PC-3 (cell line): ENCODE measurements at regions of chr1 and their contacts with region 1.

Region 1: GRCh38 chr1:112955781-112956543 is at the start of gene SLC16A1:
- DNase-seq: peak; percentile 92
- ATAC-seq: peak; percentile 75
- H3K4me3 ChIP-seq: peak within 1 kb of the TSS; percentile 82
- H3K27ac ChIP-seq: peak within 1 kb of the TSS; percentile 68
- H3K4me1 ChIP-seq: peaks cover 28% of the 10 kb centered on the region
- H3K27me3 ChIP-seq: no peaks in the 10 kb centered on the region
- CTCF ChIP-seq: 0 out of 2 replicates have a peak, but pooled peaks have one; percentile 11
- total RNA-seq, gene SLC16A1: 103 and 116 TPM in 2 replicates

Region 2: GRCh38 chr1:112809253-112809684 is 146.7 kb before region 1 on chr1:
- CTCF ChIA-PET with region 1: no interaction called
- POLR2A ChIA-PET with region 1: no interaction called
- intact Hi-C with region 1: loop called (anchors 1 kb)
- DNase-seq: peak; percentile 86
- ATAC-seq: peak; percentile 92
- H3K4me3 ChIP-seq: no peak overlapping the region
- H3K27ac ChIP-seq: no peak overlapping the region
- H3K4me1 ChIP-seq: 0 out of 2 replicates have a peak, but pooled peaks cover 6% of the 10 kb centered on the region
- H3K27me3 ChIP-seq: no peaks in the 10 kb centered on the region
- CTCF ChIP-seq: peak; percentile 96

Region 3: DNA sequence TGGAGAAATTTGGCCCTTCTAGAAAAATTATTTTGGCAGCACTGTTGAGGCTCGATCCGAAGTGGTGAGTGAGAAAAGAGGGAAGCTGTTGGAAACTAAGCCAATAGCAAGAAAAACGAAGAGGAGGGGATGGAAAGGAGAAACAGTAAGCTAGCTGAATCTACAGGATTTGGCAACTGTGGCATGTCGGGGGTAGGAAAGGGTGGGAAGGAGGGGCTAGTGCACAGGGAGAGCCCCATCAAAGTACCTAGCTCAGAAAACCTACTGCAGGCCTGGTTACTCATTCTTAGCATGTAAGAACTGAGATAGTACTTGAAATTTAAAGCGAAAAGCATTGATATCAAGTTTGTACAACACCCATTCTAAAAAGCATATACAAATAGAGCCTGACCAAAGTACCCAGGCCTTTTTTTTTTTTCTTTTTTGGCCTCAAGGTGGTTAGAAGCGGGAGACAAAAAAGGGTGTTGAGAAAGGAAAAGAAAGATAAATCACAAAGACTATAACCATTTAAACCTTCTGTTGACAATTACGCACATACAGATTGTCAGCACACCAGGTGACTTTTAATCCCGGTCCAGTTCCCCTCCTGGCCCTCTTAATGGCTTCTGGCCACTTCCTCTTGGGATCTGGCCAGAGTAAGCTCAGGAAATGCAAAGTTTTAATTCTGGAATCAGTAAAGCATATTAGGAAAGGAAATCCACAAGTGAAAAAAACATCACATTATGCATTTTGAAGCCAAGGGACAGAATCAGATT is 50.4 kb before region 1 on chr1:
- CTCF ChIA-PET with region 1: no interaction called
- POLR2A ChIA-PET with region 1: no interaction called
- intact Hi-C with region 1: loop called (anchors 2 kb)
- DNase-seq: peak; percentile 67
- ATAC-seq: peak; percentile 41
- H3K4me3 ChIP-seq: peak overlapping the region; percentile 28
- H3K27ac ChIP-seq: peak overlapping the region; percentile 88
- H3K4me1 ChIP-seq: peaks cover 40% of the 10 kb centered on the region
- H3K27me3 ChIP-seq: no peaks in the 10 kb centered on the region
- CTCF ChIP-seq: no peak

Region 4: DNA sequence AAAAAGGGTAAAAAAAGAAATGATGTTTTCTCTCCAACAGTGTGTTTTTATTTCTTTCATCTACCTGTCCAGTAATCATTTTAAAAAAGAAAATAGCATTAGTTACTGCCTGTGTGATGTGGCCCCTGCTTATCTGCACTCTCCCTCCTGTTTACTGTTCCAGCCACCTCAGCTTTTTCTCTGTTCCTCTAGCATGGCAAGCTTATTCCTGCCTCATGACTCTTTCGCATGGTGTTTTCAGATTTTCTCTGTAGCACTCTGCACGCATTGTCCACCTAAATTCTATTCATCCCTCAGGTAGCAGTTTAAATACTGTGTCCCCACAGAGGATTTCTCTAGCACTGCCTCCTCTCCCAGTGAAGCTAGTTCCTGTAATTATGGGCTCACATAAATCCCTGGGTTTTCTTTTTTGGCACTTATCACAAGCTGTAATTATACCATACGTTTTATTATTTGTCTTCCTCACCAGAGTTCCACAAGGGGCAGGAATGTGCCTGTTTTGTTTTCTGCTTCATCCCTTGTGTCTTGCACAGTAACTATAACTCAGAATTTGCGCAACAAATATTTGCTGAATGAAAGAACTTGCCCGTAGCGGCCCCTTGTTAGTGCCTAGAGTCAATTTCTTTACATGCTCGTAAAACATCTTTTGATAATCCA is 65.6 kb after region 1 on chr1:
- CTCF ChIA-PET with region 1: no interaction called
- POLR2A ChIA-PET with region 1: interaction called, 4 read pairs
- intact Hi-C with region 1: loop called (anchors 1 kb)
- DNase-seq: peak; percentile 81
- ATAC-seq: peak; percentile 95
- H3K4me3 ChIP-seq: no peak overlapping the region
- H3K27ac ChIP-seq: peak overlapping the region; percentile 38
- H3K4me1 ChIP-seq: peaks cover 9% of the 10 kb centered on the region
- H3K27me3 ChIP-seq: no peaks in the 10 kb centered on the region
- CTCF ChIP-seq: no peak; the same call in 1 of the 2 replicates